CD8-positive, alpha-beta T cell (primary cell): ENCODE measurements at regions of chr17 and their contacts with region 1.

Region 1: GRCh38 chr17:40598663-40599467 is 33.6 kb upstream of the CCR7 start:
- DNase-seq: peak in 8 of 9 experiments; percentile 48 to 95 (median 70)
- ATAC-seq: peak; percentile 66
- H3K4me3 ChIP-seq: peak overlapping the region; percentile 12 to 20
- H3K4me3 Mint-ChIP-seq: peak overlapping the region; percentile 69
- H3K27ac ChIP-seq: peak overlapping the region; percentile 82 to 92
- H3K27ac Mint-ChIP-seq: peak overlapping the region; percentile 100
- H3K4me1 ChIP-seq: peaks cover 98% of the 10 kb centered on the region
- H3K4me1 Mint-ChIP-seq: peaks cover 97% of the 10 kb centered on the region
- H3K27me3 ChIP-seq: no peaks in the 10 kb centered on the region
- H3K27me3 Mint-ChIP-seq: no peaks in the 10 kb centered on the region
- CTCF ChIP-seq: no peak

Region 2: GRCh38 chr17:40457964-40458791 is 140.7 kb before region 1 on chr17:
- CTCF ChIA-PET with region 1: no interaction called
- POLR2A ChIA-PET with region 1: no interaction called
- intact Hi-C with region 1: no loop called
- DNase-seq: no peak
- ATAC-seq: no peak
- H3K4me3 ChIP-seq: no peak overlapping the region
- H3K4me3 Mint-ChIP-seq: no peak overlapping the region
- H3K27ac ChIP-seq: no peak overlapping the region
- H3K27ac Mint-ChIP-seq: no peak overlapping the region
- H3K4me1 ChIP-seq: no peaks in the 10 kb centered on the region
- H3K4me1 Mint-ChIP-seq: no peaks in the 10 kb centered on the region
- H3K27me3 ChIP-seq: no peaks in the 10 kb centered on the region
- H3K27me3 Mint-ChIP-seq: no peaks in the 10 kb centered on the region
- CTCF ChIP-seq: no peak

Region 3: GRCh38 chr17:40499551-40500174 is 99.2 kb before region 1 on chr17:
- CTCF ChIA-PET with region 1: no interaction called
- POLR2A ChIA-PET with region 1: no interaction called
- intact Hi-C with region 1: no loop called
- DNase-seq: no peak
- ATAC-seq: no peak
- H3K4me3 ChIP-seq: no peak overlapping the region
- H3K4me3 Mint-ChIP-seq: no peak overlapping the region
- H3K27ac ChIP-seq: no peak overlapping the region
- H3K27ac Mint-ChIP-seq: no peak overlapping the region
- H3K4me1 ChIP-seq: no peaks in the 10 kb centered on the region
- H3K4me1 Mint-ChIP-seq: peaks cover 3% of the 10 kb centered on the region
- H3K27me3 ChIP-seq: no peaks in the 10 kb centered on the region
- H3K27me3 Mint-ChIP-seq: peaks cover 3% of the 10 kb centered on the region
- CTCF ChIP-seq: no peak

Region 4: GRCh38 chr17:40551879-40552768 is 46.7 kb before region 1 on chr17:
- CTCF ChIA-PET with region 1: interaction called, 168 read pairs
- POLR2A ChIA-PET with region 1: interaction called, 251 read pairs
- intact Hi-C with region 1: no loop called
- DNase-seq: peak in 6 of 9 experiments; percentile 28 to 65 (median 49)
- ATAC-seq: no peak
- H3K4me3 ChIP-seq: no peak overlapping the region
- H3K4me3 Mint-ChIP-seq: no peak overlapping the region
- H3K27ac ChIP-seq: no peak overlapping the region
- H3K27ac Mint-ChIP-seq: peak overlapping the region; percentile 94
- H3K4me1 ChIP-seq: peaks cover 99% of the 10 kb centered on the region
- H3K4me1 Mint-ChIP-seq: peaks cover 100% of the 10 kb centered on the region
- H3K27me3 ChIP-seq: no peaks in the 10 kb centered on the region
- H3K27me3 Mint-ChIP-seq: no peaks in the 10 kb centered on the region
- CTCF ChIP-seq: no peak

Region 5: GRCh38 chr17:40582328-40582901 is 16.4 kb before region 1 on chr17:
- CTCF ChIA-PET with region 1: interaction called, 6 read pairs
- POLR2A ChIA-PET with region 1: interaction called, 31 read pairs
- intact Hi-C with region 1: loop called (anchors 1 to 2 kb)
- DNase-seq: peak; percentile 48 to 90 (median 77)
- ATAC-seq: peak; percentile 85
- H3K4me3 ChIP-seq: peak overlapping the region; percentile 15 to 17
- H3K4me3 Mint-ChIP-seq: peak overlapping the region; percentile 79
- H3K27ac ChIP-seq: peak overlapping the region; percentile 60 to 74
- H3K27ac Mint-ChIP-seq: peak overlapping the region; percentile 94
- H3K4me1 ChIP-seq: peaks cover 86% of the 10 kb centered on the region
- H3K4me1 Mint-ChIP-seq: peaks cover 95% of the 10 kb centered on the region
- H3K27me3 ChIP-seq: no peaks in the 10 kb centered on the region
- H3K27me3 Mint-ChIP-seq: no peaks in the 10 kb centered on the region
- CTCF ChIP-seq: no peak

Region 6: DNA sequence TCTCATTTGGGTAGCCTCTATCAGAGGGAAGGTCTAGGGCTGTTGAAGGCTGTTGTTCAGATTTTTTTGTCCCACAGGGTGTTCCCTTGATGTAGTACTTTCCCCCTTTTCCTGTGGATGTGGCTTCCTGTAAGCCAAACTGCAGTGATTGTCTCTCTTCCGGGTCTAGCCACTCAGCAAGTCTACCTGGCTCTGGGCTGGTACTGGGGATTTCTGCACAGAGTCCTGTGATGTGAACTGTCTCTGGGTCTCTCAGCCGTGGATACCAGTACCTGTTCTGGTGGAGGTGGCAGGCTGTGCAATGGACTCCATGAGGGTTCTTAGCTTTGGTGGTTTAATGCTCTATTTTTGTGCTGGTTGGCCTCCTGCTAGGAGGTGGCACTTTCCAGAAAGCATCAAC is 10.3 kb before region 1 on chr17:
- CTCF ChIA-PET with region 1: interaction called, 6 read pairs
- POLR2A ChIA-PET with region 1: interaction called, 31 read pairs
- intact Hi-C with region 1: loop called in 1 of 2 experiments (anchors 2 kb)
- DNase-seq: peak in 2 of 9 experiments; percentile 48 to 68
- ATAC-seq: no peak
- H3K4me3 ChIP-seq: no peak overlapping the region
- H3K4me3 Mint-ChIP-seq: peak overlapping the region; percentile 40
- H3K27ac ChIP-seq: peak overlapping the region in 1 of 2 experiments; percentile 22
- H3K27ac Mint-ChIP-seq: peak overlapping the region; percentile 89
- H3K4me1 ChIP-seq: peaks cover 63% of the 10 kb centered on the region
- H3K4me1 Mint-ChIP-seq: peaks cover 83% of the 10 kb centered on the region
- H3K27me3 ChIP-seq: no peaks in the 10 kb centered on the region
- H3K27me3 Mint-ChIP-seq: no peaks in the 10 kb centered on the region
- CTCF ChIP-seq: no peak

Region 7: DNA sequence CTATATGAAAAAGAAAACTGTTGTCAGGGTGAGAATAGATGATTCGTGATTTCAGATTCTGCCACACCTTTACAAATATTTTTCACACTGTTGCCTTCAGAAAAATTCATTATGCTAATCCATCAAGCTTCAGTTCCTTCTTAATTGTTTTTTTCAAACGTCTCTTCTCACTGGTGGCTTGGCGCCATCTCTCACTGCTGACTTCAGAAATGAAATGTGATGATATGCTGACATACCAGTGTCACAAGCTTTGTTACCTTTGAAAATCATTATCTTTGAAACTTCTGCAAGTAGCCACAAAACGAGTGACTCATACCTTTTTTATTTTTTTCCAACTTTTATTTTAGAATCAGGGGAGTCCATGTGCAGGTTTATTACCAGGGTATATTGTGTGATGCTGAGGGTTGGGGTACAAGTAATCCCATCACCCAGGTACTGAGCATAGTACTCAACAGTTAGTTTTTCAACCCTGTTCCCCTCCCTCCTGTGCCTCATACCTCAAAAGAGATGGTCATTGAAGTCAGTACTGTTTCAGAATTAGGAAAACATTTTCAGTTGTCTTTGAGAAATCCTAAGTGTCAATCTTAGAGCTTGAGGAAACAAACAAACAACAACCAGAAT is 80.1 kb after region 1 on chr17:
- CTCF ChIA-PET with region 1: no interaction called
- POLR2A ChIA-PET with region 1: no interaction called
- intact Hi-C with region 1: no loop called
- DNase-seq: peak in 1 of 9 experiments; percentile 10
- ATAC-seq: peak; percentile 38
- H3K4me3 ChIP-seq: no peak overlapping the region
- H3K4me3 Mint-ChIP-seq: no peak overlapping the region
- H3K27ac ChIP-seq: no peak overlapping the region
- H3K27ac Mint-ChIP-seq: no peak overlapping the region
- H3K4me1 ChIP-seq: no peaks in the 10 kb centered on the region
- H3K4me1 Mint-ChIP-seq: no peaks in the 10 kb centered on the region
- H3K27me3 ChIP-seq: peaks cover 0 to 4% of the 10 kb centered on the region in 2 experiments
- H3K27me3 Mint-ChIP-seq: peaks cover 47% of the 10 kb centered on the region
- CTCF ChIP-seq: no peak